Ascending aorta (tissue), 2 donors: ENCODE measurements at regions of chr9 and their contacts with region 1.

Region 1: DNA sequence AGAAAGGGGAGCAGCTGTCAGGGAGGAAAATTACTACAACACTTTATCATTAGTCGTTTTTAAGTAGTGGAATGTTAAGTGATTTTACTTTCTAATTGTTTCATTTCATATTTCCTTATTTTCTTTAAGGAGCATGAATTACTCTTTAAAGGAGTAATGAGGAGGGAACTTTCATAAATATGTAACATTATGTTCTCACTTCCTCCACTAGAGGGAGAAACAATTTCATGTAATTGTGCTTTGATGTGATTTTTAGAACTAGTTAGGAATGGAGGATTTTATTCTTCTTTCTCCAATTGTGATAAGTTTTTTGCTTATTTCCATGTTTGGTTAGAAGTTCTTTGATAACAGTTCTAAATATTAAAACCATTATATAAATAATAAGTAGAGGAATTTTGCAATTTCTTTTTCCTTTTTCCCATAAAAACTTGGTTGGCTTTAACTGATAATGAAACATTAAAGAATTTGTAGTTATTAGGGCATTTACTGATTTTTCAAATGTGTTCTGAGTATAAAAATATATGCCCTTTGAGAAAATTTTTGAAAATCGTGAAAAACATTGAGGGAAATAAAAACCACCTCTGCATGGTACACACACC is 25.6 kb downstream of the CEP78 start:
- DNase-seq: no peak
- H3K4me3 ChIP-seq: no peak overlapping the region
- H3K27ac ChIP-seq: no peak overlapping the region
- H3K4me1 ChIP-seq: no peaks in the 10 kb centered on the region
- H3K27me3 ChIP-seq: no peaks in the 10 kb centered on the region
- CTCF ChIP-seq: peak; percentile 27 to 57 (median 33)

Region 2: GRCh38 chr9:78288214-78288892 is 26.9 kb after region 1 on chr9:
- intact Hi-C with region 1: no loop called
- DNase-seq: no peak
- H3K4me3 ChIP-seq: no peak overlapping the region
- H3K27ac ChIP-seq: no peak overlapping the region
- H3K4me1 ChIP-seq: no peaks in the 10 kb centered on the region
- H3K27me3 ChIP-seq: no peaks in the 10 kb centered on the region
- CTCF ChIP-seq: no peak

Region 3: GRCh38 chr9:78369639-78370219 is 108.2 kb after region 1 on chr9:
- intact Hi-C with region 1: loop called (anchors 2 kb)
- DNase-seq: peak in 1 of 2 donors; percentile 66
- H3K4me3 ChIP-seq: no peak overlapping the region
- H3K27ac ChIP-seq: no peak overlapping the region
- H3K4me1 ChIP-seq: no peaks in the 10 kb centered on the region
- H3K27me3 ChIP-seq: no peaks in the 10 kb centered on the region
- CTCF ChIP-seq: peak; percentile 31 to 60 (median 55)